IMR-90 (cell line): ENCODE measurements at regions of chr11 and their contacts with region 1.

Region 1: DNA sequence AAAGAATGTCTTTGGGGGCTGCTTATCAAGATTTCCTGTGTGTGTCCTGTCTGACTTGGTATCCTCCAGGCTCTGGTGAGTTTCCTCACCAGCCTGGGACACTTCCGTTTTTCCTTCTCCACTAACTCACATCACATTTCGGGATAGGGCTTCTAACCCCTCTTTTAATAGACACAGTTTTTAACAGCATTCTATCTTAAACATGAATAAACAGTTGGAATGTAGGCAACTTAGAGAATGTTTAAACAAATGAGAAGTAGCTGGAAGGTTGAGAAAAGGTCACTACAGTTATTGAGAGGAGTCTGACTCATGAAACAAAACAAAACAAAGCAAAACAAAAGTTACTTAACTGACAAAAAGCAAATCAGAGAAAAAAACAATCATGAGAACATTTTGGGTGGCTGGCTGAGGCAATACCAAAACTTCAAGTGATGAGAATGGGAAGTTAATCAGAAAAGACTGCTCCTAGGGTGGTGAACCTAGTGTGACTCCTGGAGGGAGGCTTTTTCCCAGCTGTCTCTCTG is 64.7 kb upstream of the CTSC start:
- DNase-seq: peak; percentile 90
- ATAC-seq: peak; percentile 83
- H3K4me3 ChIP-seq: no peak overlapping the region
- H3K27ac ChIP-seq: peak overlapping the region; percentile 89; the same call in 1 of the 2 replicates
- H3K4me1 ChIP-seq: peaks cover 8% of the 10 kb centered on the region
- H3K27me3 ChIP-seq: no peaks in the 10 kb centered on the region
- CTCF ChIP-seq: no peak
- POLR2A ChIP-seq: no peak
- RAD21 ChIP-seq: no peak

Region 2: DNA sequence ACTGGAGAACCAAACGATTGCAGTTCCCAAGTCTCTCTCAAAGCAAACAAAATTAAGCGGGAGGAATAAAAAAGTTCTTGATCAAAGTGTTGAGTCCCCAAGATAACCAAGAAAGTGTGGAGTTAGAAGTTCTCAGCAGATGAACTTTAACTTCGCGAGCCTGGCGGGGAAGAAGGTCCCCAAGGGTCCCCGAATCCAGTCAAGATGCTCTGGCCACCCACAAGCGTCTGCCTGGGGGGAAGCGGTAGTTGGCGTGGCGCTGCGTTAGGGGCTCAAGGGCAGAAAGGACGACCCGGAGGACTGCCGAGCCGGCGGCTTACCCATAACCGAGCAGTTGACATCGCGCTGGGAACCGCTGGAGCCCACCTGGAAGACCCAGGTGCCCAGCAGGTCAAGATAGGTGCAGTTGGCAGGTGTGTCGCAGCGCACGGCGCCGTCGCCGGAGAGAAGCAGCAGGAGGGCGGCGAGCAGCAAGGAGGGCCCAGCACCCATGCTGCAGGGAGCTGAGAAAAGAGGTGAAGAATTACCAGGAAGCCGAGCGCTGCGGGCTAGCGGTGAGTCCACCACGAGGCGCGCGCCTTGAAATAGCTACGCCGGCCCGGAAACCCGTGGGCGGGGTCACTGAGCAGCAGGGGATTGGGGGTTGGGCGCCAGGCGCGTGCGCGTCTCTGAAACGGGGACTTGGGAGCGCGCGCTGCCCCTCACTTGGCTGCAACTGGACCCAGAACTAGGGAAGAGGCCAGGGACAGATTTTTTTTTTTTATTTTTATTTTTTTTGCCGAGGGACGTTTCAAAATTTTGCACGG is 64.9 kb before region 1 on chr11 and contains the start of gene CTSC:
- CTCF ChIA-PET with region 1: interaction called, 4 read pairs
- POLR2A ChIA-PET with region 1: interaction called, 6 read pairs
- dilution Hi-C with region 1: no loop called
- in situ Hi-C with region 1: no loop called
- intact Hi-C with region 1: loop called (anchors 1 kb)
- DNase-seq: peak; percentile 87
- ATAC-seq: peak; percentile 90
- H3K4me3 ChIP-seq: peak within 1 kb of the TSS; percentile 96
- H3K27ac ChIP-seq: peak within 1 kb of the TSS; percentile 98
- H3K4me1 ChIP-seq: peaks cover 2% of the 10 kb centered on the region
- H3K27me3 ChIP-seq: no peaks in the 10 kb centered on the region
- CTCF ChIP-seq: peak; percentile 23; the same call in 1 of the 2 replicates
- POLR2A ChIP-seq: peak; percentile 83
- RAD21 ChIP-seq: peak; percentile 11
- total RNA-seq, gene CTSC: 178 and 208 TPM in 2 replicates

Region 3: GRCh38 chr11:88384673-88385005 is 17.6 kb before region 1 on chr11:
- CTCF ChIA-PET with region 1: interaction called, 5 read pairs
- POLR2A ChIA-PET with region 1: no interaction called
- dilution Hi-C with region 1: no loop called
- in situ Hi-C with region 1: no loop called
- intact Hi-C with region 1: loop called (anchors 1 kb)
- DNase-seq: peak; percentile 49
- ATAC-seq: peak; percentile 67
- H3K4me3 ChIP-seq: no peak overlapping the region
- H3K27ac ChIP-seq: peak overlapping the region; percentile 36
- H3K4me1 ChIP-seq: peaks cover 9% of the 10 kb centered on the region
- H3K27me3 ChIP-seq: no peaks in the 10 kb centered on the region
- CTCF ChIP-seq: no peak
- POLR2A ChIP-seq: no peak
- RAD21 ChIP-seq: no peak

Region 4: GRCh38 chr11:88484873-88485621 is 82.8 kb after region 1 on chr11:
- CTCF ChIA-PET with region 1: interaction called, 3 read pairs
- POLR2A ChIA-PET with region 1: no interaction called
- dilution Hi-C with region 1: no loop called
- in situ Hi-C with region 1: no loop called
- intact Hi-C with region 1: loop called (anchors 1 kb)
- DNase-seq: peak; percentile 23
- ATAC-seq: no peak; the same call in 1 of the 2 replicates
- H3K4me3 ChIP-seq: no peak overlapping the region
- H3K27ac ChIP-seq: no peak overlapping the region
- H3K4me1 ChIP-seq: peaks cover 5% of the 10 kb centered on the region; the same call in 1 of the 2 replicates
- H3K27me3 ChIP-seq: no peaks in the 10 kb centered on the region
- CTCF ChIP-seq: peak; percentile 49
- POLR2A ChIP-seq: no peak
- RAD21 ChIP-seq: peak; percentile 27; the same call in 1 of the 2 replicates

Region 5: GRCh38 chr11:88535916-88536547 is 133.8 kb after region 1 on chr11:
- CTCF ChIA-PET with region 1: no interaction called
- POLR2A ChIA-PET with region 1: no interaction called
- dilution Hi-C with region 1: no loop called
- in situ Hi-C with region 1: no loop called
- intact Hi-C with region 1: loop called (anchors 2 kb)
- DNase-seq: peak; percentile 92
- ATAC-seq: peak; percentile 97
- H3K4me3 ChIP-seq: no peak overlapping the region
- H3K27ac ChIP-seq: peak overlapping the region; percentile 97
- H3K4me1 ChIP-seq: peaks cover 8% of the 10 kb centered on the region
- H3K27me3 ChIP-seq: no peaks in the 10 kb centered on the region
- CTCF ChIP-seq: no peak
- POLR2A ChIP-seq: no peak
- RAD21 ChIP-seq: no peak

Region 6: GRCh38 chr11:88631497-88631896 is 229.2 kb after region 1 on chr11:
- CTCF ChIA-PET with region 1: no interaction called
- POLR2A ChIA-PET with region 1: no interaction called
- dilution Hi-C with region 1: no loop called
- in situ Hi-C with region 1: no loop called
- intact Hi-C with region 1: loop called (anchors 5 kb)
- DNase-seq: peak; percentile 51
- ATAC-seq: no peak
- H3K4me3 ChIP-seq: no peak overlapping the region
- H3K27ac ChIP-seq: no peak overlapping the region
- H3K4me1 ChIP-seq: no peaks in the 10 kb centered on the region; the same call in 1 of the 2 replicates
- H3K27me3 ChIP-seq: no peaks in the 10 kb centered on the region
- CTCF ChIP-seq: no peak
- POLR2A ChIP-seq: no peak
- RAD21 ChIP-seq: no peak